GM12878 (cell line): ENCODE measurements at regions of chrX and their contacts with region 1.

Region 1: GRCh38 chrX:150575416-150575808 is 7.0 kb downstream of the MTM1 start:
- DNase-seq: no peak
- ATAC-seq: peak; percentile 35
- H3K4me3 ChIP-seq: peak overlapping the region; percentile 34; the same call in 1 of the 2 replicates
- H3K27ac ChIP-seq: peak overlapping the region; percentile 34
- H3K4me1 ChIP-seq: peaks cover 14% of the 10 kb centered on the region; the same call in 1 of the 2 replicates
- H3K27me3 ChIP-seq: no peaks in the 10 kb centered on the region
- CTCF ChIP-seq: no peak
- EP300 ChIP-seq: no peak
- POLR2A ChIP-seq: no peak
- RAD21 ChIP-seq: no peak

Region 2: GRCh38 chrX:150326541-150327247 is 248.7 kb before region 1 on chrX:
- CTCF ChIA-PET with region 1: no interaction called
- POLR2A ChIA-PET with region 1: no interaction called
- RAD21 ChIA-PET with region 1: no interaction called
- SMC1A ChIA-PET with region 1: no interaction called
- in situ Hi-C with region 1: no loop called
- intact Hi-C with region 1: no loop called
- DNase-seq: no peak
- ATAC-seq: no peak
- H3K4me3 ChIP-seq: no peak overlapping the region
- H3K27ac ChIP-seq: no peak overlapping the region
- H3K4me1 ChIP-seq: no peaks in the 10 kb centered on the region
- H3K27me3 ChIP-seq: no peaks in the 10 kb centered on the region; a peak in 2 of 4 replicates
- CTCF ChIP-seq: no peak
- EP300 ChIP-seq: no peak
- POLR2A ChIP-seq: no peak
- RAD21 ChIP-seq: no peak

Region 3: DNA sequence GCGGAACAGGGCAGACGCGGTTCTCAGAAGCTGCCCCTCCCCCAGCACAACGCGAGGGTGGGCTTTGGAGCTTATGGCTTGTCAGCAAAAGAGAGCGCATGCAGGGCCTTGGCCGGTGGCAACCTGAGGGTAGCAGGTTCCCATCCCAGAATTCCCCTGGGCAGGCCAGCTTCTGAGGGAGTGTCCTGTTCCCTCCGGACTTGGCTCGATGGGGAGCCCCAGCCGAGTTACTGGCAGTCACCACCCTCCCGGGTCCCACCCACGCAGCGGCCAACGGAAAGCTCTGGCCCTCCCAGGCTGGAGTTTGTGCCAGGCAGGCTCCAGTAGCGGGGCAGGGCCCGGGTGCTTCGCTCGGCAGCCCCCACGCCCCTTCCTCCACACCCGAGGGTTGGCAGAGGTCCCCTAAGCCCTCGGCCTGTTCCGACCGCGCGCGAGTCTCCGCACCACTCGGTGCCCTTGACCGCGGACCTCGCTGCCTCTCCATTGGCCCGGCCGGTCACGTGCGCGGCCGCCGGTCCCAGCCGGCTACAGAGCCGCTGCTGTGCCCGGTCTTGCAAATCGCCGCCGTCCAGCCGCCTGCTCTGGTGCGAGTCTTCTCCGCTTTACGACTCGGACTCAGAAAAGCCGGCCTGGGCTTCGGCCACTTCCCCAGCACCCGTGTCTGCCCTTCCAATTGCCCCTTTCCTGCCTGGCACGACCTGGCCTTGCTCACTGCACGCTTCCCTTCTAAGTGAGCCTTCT is 27.9 kb before region 1 on chrX:
- CTCF ChIA-PET with region 1: interaction called, 7 read pairs
- POLR2A ChIA-PET with region 1: interaction called, 6 read pairs
- RAD21 ChIA-PET with region 1: interaction called, 4 read pairs
- SMC1A ChIA-PET with region 1: interaction called, 6 read pairs
- in situ Hi-C with region 1: no loop called
- intact Hi-C with region 1: loop called (anchors 2 kb)
- DNase-seq: no peak
- ATAC-seq: peak; percentile 66
- H3K4me3 ChIP-seq: no peak overlapping the region; the same call in 1 of the 2 replicates
- H3K27ac ChIP-seq: no peak overlapping the region
- H3K4me1 ChIP-seq: peaks cover 7% of the 10 kb centered on the region; the same call in 1 of the 2 replicates
- H3K27me3 ChIP-seq: no peaks in the 10 kb centered on the region; a peak in 2 of 4 replicates
- CTCF ChIP-seq: no peak
- EP300 ChIP-seq: no peak
- POLR2A ChIP-seq: no peak
- RAD21 ChIP-seq: no peak